ENCODE measurements at regions of chr7 and their contacts with region 1.

Region 1: DNA sequence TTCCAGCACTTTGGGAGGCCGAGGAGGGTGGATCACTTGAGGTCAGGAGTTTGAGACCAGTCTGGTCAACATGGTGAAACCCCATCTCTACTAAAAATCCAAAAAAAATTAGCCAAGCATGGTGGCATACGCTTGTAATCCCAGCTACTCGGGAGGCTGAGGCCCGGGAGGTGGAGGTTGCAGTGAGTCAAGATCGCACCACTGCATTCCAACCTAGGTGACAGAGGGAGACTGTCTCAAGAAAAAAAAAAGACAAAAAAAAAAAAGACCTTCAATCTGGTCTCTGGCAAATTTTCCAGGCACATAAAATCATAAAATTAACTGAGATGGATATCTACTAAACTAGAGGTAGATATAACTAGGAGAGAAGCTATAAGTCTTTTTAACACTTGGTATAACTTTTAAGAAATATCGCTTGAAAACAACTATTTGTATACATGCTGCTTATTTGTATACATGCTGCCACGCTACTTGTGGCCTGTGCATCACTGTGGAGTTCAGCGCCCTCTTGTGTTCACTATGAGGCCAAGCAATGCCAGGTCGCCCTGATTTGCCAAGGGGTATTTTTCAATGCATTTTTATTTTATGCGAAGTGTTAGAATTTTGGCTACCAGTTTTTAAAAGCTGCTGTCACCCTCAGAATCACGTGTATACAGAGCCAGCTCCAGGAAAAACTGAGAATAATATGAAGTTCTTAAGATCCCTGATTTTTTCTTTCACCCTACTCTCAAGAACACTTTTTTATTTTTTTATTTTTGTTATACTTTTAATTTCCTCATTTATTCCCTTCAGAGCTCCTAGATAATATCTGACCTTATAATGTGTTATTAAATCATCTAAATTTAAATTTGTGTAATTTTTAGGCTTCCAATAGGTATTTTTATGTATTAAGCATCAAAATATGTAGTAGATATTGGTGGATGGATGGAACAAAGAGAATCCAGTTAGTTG is 26.7 kb downstream of the CYCS start:
- DNase-seq: peak; percentile 39
- H3K4me3 ChIP-seq: no peak overlapping the region
- H3K27ac ChIP-seq: no peak overlapping the region
- H3K27me3 ChIP-seq: peaks cover 3% of the 10 kb centered on the region
- CTCF ChIP-seq: peak; percentile 93

Region 2: DNA sequence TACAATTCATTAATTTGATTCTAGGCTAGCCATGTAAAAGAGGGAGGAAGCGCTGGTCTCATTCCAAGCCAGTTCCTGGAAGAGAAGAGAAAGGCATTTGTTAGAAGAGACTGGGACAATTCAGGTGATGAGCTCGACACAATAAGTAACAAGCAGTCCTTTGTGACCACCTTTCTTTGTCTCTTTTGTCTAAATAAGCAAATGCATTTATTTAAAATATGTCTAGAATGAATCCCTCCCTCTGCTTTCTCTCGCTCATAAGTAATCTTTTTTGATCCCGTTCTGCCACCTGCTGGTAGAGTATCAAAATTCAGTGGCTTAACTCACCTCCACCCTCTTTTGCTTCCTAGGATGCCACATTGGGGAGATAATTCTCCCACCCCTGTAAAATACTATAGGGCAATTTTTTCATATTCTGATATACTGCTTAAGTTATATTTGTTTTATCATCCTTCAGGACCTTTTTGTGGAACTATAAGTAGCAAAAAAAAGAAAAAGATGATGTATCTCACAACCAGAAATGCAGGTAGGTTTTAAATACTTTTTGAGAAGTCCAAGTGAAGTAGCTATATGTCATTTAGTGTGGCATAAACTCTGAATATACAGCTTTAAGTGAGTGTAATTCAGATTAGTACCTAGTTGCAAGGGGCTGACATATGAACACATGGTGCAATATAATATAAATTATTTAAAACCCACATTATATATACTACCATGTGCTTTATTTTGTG is 432.6 kb before region 1 on chr7:
- CTCF ChIA-PET with region 1: interaction called, 15 read pairs
- POLR2A ChIA-PET with region 1: no interaction called
- DNase-seq: peak; percentile 29
- H3K4me3 ChIP-seq: no peak overlapping the region
- H3K27ac ChIP-seq: no peak overlapping the region
- H3K27me3 ChIP-seq: no peaks in the 10 kb centered on the region
- CTCF ChIP-seq: peak; percentile 67

Region 3: DNA sequence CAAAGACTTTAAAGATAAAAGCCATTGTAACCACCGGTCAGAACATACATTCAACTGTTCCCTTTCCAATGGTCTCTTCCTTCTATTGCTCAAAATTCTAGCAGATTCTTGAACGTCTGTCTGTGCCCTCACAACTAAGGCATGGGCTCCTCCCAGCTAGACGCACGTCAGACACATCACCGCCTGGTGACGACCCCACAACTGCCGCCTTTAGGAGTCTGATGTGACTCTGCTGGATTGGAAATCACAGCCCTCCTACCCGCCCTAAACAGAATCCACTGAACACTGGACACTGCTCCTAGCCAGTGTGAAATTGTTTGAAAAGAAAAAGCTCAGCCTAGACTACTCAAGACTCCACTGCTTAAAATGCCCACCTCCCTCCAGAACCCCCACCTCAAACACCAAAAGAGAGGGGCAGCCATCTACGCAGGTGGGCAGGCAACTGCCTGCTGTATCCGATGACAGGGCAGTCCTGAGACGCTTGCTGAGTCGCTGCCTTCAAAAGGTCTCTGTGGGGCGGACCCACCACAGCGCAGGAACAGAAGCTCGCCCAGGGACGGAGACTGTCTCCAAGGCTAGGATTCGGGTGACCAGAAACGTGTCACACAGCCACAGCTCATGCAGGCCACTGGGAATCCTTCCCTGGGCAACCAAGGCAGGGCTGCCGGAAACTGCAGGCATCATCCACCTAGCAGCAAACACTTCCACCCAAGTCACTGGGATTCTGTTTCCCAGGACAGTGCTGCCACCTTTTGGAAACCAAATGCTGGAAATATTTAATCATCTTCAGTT is 375.8 kb before region 1 on chr7:
- CTCF ChIA-PET with region 1: interaction called, 10 read pairs
- POLR2A ChIA-PET with region 1: no interaction called
- DNase-seq: no peak
- H3K4me3 ChIP-seq: no peak overlapping the region
- H3K27ac ChIP-seq: peak overlapping the region; percentile 11
- H3K27me3 ChIP-seq: no peaks in the 10 kb centered on the region
- CTCF ChIP-seq: peak; percentile 59

Region 4: GRCh38 chr7:24757353-24758275 is 340.8 kb before region 1 on chr7 and contains the start of gene GSDME:
- CTCF ChIA-PET with region 1: interaction called, 19 read pairs
- POLR2A ChIA-PET with region 1: interaction called, 3 read pairs
- DNase-seq: peak; percentile 15
- H3K4me3 ChIP-seq: peak within 1 kb of the TSS; percentile 78
- H3K27ac ChIP-seq: peak within 1 kb of the TSS; percentile 90
- H3K27me3 ChIP-seq: no peaks in the 10 kb centered on the region
- CTCF ChIP-seq: no peak
- polyA plus RNA-seq, gene GSDME: 58.3 and 63.8 TPM in 2 replicates

Region 5: DNA sequence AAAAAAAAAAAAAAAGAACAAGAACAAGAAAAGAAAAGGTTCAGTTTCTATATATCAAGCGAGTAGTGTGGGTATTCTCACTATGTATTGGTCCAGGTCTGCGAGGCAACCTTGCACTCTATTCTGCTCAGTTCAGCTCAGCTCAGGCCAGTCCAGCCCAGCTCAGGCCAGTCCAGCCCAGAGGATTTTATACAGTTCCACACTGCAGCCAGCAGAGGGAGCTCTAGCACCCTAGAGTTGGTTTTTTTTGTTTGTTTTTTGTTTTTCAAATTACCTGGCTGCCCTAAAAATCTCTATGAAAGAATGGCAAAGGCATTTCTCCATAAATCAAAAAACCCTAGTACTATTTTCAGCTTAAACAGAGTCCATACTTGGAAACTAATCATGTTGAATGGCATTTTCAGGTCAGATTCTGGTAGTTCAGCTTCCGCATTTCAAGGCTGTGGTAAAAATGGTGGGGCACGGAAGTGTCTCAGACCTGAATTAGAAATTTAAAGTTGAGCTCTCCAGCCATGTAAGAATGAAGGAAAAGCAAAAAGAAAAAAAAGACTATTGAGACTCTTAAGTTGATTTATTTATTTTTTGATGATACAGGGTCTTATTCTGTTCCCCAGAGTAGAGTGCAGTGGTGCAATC is 285.9 kb before region 1 on chr7:
- CTCF ChIA-PET with region 1: interaction called, 328 read pairs
- POLR2A ChIA-PET with region 1: interaction called, 7 read pairs
- DNase-seq: no peak
- H3K4me3 ChIP-seq: no peak overlapping the region
- H3K27ac ChIP-seq: no peak overlapping the region
- H3K27me3 ChIP-seq: no peaks in the 10 kb centered on the region
- CTCF ChIP-seq: peak; percentile 90

Region 6: DNA sequence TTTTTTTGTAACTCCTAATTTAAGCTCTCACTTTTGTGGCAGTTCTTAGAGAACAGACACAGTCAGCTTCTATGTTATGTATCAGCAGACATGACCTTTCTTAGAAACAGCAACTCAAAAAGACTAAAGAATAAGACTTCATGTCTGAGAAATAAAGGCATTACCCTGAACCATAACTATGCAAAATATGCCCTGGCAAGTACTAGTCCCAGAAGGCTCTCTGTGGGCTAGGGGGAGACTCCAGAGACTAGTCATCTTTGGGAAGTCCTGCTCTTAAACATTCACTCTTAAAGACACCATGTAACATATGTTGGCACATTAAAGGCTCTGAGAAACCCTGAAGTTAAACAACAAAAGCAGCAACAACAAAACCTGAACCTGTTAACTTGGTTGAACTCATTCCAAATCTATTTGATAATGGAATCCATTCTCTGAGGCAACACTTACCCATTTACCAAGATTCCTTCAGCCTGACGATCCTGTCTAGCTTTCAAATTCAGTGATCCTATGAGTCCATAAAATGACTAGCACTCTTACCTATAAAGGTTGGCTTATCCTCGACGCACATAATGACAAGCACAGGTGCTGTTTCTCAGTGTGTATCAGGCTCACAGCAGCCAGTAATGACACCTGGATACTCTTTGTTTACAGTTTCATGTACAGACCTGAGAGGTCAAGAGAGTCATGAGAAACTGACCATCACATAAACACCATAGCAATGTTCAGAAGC is 180.7 kb before region 1 on chr7:
- CTCF ChIA-PET with region 1: interaction called, 11 read pairs
- POLR2A ChIA-PET with region 1: no interaction called
- DNase-seq: peak; percentile 58
- H3K4me3 ChIP-seq: no peak overlapping the region
- H3K27ac ChIP-seq: no peak overlapping the region
- H3K27me3 ChIP-seq: no peaks in the 10 kb centered on the region
- CTCF ChIP-seq: no peak

Region 7: DNA sequence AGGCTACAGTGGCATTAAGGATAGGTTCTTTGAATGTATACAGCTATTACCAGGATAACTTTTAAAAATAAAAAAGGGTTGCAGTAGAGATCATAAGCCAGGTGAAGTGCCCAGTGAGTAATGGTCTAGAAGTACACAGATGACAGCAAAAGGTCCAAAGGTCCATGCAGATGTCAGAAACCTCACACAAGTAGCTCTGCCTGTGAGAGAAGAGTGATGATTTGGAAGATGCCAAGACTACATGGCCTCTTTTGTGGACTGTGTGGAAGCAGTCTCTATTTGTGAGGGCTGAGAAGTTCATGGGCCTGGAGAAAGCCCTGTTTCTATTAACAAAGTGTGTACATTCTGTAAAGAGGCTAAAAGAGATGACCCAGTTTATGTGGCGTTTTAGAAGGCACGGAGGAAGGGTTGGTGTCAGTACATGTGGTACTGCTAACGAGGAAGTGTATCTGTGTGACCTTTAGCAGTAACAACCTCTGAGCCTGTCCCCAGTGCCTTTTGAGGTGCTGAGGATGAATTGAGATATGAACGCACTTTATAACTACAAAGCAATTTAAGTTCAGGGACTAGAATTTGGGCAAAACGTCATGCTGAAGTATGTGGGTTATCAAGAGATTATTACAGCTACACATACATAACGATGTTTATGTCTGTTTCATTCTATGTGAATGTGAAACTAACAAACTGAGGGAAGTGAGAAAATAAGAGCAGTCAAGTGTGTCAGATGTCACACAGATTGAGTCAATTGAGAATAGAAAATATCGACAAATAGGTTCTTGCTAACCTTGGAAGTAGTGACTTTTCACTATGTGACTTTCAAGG is 19.1 kb after region 1 on chr7:
- CTCF ChIA-PET with region 1: interaction called, 21 read pairs
- POLR2A ChIA-PET with region 1: no interaction called
- DNase-seq: no peak
- H3K4me3 ChIP-seq: no peak overlapping the region
- H3K27ac ChIP-seq: no peak overlapping the region
- H3K27me3 ChIP-seq: no peaks in the 10 kb centered on the region
- CTCF ChIP-seq: no peak